Esophagus muscularis mucosa (tissue), 4 donors: ENCODE measurements at regions of chr1 and their contacts with region 1.

Region 1: DNA sequence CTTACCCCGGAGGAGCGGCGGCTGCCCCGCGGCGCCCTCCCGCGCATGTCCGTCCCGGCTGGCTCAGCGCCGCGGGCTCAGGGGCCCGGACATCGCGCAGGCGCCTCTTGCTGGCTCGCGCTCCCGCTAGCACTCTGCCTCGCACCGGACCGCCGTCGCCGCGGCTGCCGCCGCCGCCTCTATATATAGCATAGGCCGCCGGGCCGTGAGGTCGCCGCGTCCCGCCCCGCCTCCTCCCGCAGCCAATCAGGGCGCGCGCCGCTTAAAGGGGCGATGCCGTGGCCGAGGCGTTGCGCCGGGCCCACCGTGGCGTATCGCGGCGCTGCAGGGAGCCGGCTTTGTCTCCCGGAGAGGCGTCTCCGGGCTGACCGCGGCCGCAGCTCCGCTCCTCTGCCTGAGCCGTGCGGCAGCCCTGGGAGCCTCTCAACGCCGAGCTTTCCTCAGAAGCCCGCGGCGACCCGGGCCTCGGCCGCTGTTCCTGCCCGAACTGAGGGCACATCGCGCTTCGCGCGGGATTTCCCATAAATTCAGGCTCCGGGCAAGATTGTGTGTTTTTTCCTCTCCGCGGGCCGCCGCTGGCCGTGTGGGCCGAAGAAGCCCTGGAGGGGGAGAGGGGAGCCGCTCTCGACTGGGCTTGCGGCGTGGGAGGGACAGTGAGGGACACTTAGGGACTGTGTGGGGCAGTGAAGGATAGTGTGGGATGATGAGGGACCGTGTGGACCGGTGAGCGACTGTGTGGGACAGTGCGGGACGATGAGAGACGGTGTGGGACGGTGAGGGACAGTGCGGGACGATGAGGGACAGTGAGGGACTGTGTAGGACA is at the start of gene ERRFI1:
- DNase-seq: peak; percentile 98
- H3K4me3 ChIP-seq: peak within 1 kb of the TSS; percentile 89 to 97 (median 92)
- H3K27ac ChIP-seq: peak within 1 kb of the TSS; percentile 90 to 98 (median 95)
- H3K4me1 ChIP-seq: peaks cover 38 to 61% (median 53%) of the 10 kb centered on the region in 4 donors
- H3K27me3 ChIP-seq: no peaks in the 10 kb centered on the region
- CTCF ChIP-seq: peak in 1 of 3 experiments; percentile 27
- EP300 ChIP-seq: peak; percentile 3
- POLR2A ChIP-seq: peak; percentile 96
- total RNA-seq, gene ERRFI1: 308 to 587 (median 435) TPM

Region 2: DNA sequence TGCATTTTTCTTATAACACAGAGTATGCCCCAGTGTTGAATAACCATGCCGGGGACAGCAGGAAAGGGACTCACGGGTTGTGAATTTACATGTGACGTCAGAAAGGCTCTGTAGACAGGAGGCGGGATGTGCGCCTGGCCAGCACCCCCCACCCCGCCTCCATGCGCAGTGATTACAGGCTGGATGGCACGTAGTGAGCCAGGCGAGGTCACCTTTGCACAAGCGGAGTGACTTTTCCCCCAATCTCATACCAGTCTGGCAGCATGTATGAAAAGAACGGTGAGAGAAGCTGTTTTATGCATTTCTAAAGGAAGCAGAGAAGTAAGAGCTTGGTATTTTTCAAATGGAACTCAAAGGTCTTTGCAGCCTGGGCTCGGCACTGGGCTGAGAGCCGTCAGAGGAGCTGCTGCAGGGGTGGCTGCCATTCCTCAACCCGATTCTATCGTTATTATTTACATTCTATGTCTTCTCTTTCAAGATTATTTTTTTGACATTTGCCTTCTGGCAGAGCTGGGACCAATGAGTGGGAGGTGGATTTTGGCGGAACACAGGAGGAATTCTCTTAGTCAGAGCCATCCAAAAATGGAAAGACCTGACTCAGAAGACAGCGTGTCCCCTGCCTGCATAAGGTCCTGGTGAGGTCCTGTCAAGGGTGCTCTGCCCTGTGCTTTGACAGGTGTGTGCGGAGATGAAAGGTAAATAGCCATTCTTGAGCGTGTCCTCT is 176.0 kb after region 1 on chr1:
- intact Hi-C with region 1: loop called (anchors 5 kb)
- DNase-seq: no peak
- H3K4me3 ChIP-seq: peak overlapping the region; percentile 14 to 43 (median 28)
- H3K27ac ChIP-seq: peak overlapping the region; percentile 96 to 98 (median 98)
- H3K4me1 ChIP-seq: peaks cover 33 to 92% (median 84%) of the 10 kb centered on the region in 4 donors
- H3K27me3 ChIP-seq: no peaks in the 10 kb centered on the region
- CTCF ChIP-seq: no peak
- EP300 ChIP-seq: peak; percentile 95
- POLR2A ChIP-seq: no peak

Region 3: DNA sequence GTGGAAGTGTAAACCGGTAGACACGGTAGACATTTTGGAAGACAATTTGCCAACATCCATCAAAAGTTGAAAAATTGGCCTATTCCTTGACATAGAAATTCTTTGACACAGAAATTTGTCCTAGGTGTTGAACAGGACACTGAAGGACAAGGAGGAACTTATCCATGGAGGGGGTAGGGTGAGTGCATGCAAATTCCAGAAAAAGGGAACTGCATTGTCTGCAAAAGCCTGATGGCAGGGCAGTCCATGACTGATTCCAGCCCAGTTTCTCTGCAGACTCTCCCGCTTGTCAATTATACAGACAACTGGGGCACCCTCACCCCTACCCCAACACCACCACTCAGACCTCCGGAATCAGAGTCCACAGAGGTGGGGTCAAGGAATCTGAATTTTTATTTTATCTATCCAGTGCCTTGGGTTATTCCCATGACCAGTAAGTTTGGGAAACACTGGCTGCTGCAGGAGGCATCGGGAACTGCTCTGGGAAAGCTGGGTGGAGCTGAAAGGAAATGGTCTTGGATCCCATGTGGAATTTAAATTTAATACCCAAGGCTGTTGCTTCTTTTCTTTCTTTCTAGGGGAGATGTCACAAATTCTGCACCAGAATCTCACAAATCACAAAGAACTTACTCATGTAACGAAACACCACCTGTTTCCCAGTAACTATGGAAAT is 188.3 kb after region 1 on chr1:
- intact Hi-C with region 1: no loop called
- DNase-seq: no peak
- H3K4me3 ChIP-seq: no peak overlapping the region
- H3K27ac ChIP-seq: peak overlapping the region; percentile 81 to 83 (median 83)
- H3K4me1 ChIP-seq: peaks cover 12 to 56% (median 46%) of the 10 kb centered on the region in 4 donors
- H3K27me3 ChIP-seq: no peaks in the 10 kb centered on the region
- CTCF ChIP-seq: peak in 1 of 3 experiments; percentile 7
- EP300 ChIP-seq: no peak
- POLR2A ChIP-seq: no peak